Mammary epithelial cell (primary cell): ENCODE measurements at regions of chr17 and their contacts with region 1.

Region 1: DNA sequence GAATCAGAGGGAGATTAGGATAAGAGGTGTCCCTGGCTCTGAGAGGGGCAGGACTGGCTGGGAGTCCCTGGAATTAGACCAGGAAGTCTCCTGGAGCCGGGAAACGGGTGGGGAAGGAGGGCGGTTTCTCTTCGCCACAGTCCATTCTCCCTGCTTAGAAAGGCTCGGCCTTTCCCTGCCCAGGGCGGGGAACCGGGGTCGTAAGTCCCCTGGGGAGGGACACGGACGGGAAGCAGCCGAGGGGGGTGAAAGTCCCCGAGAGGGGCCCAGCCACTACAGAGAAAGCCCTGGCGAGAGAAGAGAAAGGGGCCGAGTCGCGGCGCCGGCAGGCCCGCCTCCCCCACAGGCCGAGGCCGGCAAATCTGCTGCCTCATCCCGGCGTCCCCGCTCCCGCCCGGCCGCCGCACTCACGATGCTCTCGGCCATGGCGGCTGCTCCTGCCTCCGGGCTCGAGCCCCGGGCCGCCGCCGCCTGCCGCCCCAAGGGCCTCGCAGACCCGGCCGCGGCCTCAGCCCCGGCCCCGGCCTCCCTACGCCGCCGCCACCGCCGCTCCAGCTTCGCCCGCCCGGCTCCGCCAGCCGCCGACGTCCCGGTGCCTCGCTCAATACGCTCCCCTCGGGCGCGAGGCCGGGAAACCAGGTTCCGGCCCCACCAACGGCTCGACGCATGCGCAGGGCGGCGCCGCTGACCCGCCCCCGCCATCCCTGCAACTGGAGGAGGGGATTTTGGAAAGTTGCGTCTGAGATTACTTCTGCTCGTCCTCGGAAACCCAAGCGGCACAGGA is at the starts of genes NPLOC4 and TSPAN10:
- DNase-seq: peak; percentile 85
- H3K4me3 ChIP-seq: peak within 1 kb of the TSS; percentile 81 to 89 (median 84)
- H3K27ac ChIP-seq: peak within 1 kb of the TSS; percentile 87
- H3K4me1 ChIP-seq: peaks cover 13% of the 10 kb centered on the region
- H3K27me3 ChIP-seq: no peaks in the 10 kb centered on the region
- CTCF ChIP-seq: no peak
- total RNA-seq, gene NPLOC4: 84.2 to 103 TPM
- total RNA-seq, gene TSPAN10: 1.7 to 1.8 TPM

Region 2: DNA sequence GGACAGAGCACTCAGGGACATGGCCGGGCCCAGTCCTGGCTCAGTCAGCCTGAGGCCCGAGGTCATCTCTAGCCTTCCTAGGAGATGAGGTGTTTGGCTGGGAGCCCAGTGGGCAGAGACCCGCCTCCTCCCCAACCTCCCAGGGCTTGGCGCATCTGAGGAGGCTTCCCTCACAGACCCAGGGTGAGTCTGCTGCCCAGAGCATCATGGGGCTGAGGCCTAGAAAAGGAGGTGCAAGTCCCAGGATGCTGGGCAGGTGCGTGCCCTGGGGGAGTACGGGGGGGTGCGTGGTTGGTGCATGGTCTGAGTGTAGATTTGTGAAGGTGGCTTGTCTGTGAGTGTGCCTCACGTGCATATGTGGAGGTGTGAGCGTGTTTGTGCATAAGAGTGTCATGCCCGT is 15.0 kb after region 1 on chr17:
- CTCF ChIA-PET with region 1: no interaction called
- dilution Hi-C with region 1: no loop called
- in situ Hi-C with region 1: no loop called
- intact Hi-C with region 1: no loop called
- DNase-seq: peak; percentile 69
- H3K4me3 ChIP-seq: no peak overlapping the region
- H3K27ac ChIP-seq: no peak overlapping the region
- H3K4me1 ChIP-seq: peaks cover 12% of the 10 kb centered on the region
- H3K27me3 ChIP-seq: peaks cover 11% of the 10 kb centered on the region
- CTCF ChIP-seq: no peak

Region 3: DNA sequence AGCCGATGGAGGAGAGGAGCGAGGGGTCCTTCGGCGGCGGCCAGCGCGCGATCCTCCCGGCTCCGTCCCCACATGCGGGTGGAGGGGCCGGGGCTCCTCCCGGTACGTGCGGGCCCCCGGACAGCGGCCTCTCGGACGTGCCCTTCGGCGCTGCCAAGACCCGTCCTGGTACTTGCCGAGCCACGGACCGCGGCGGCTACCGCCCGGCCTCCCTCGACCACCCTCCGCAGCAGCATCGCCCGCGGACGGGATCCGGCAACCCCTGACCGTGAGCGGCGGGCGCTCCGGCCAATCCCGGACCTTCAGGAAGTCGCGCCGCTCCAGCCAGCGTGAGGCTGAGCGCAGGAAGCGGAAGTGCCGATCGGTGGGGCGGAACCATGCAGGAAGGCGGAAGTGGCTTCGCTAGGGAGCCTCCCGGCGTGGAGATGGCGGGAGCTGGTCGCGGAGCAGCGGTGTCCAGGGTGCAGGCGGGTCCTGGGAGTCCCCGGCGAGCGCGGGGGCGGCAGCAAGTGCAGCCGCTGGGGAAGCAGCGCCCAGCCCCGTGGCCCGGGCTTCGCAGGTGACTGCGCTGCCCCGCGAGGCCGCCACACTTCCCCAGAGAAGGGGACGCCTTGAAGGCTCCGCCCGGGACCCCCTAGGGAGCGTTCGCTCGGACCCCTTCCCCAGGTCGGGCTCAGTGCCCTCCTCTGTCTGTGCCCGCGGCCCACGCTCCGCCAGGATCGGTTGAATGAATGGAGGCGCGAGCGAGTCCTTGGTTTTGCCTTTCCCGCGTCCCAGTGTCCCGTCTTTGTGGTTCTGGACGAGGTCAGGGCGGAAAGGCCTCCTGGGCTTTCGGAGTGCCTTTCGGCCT is 29.9 kb after region 1 on chr17 and contains the starts of genes CCDC137 and OXLD1:
- CTCF ChIA-PET with region 1: no interaction called
- dilution Hi-C with region 1: no loop called
- in situ Hi-C with region 1: no loop called
- intact Hi-C with region 1: loop called (anchors 1 kb)
- DNase-seq: peak; percentile 94
- H3K4me3 ChIP-seq: peak within 1 kb of the TSS; percentile 70 to 89 (median 82)
- H3K27ac ChIP-seq: peak within 1 kb of the TSS; percentile 74
- H3K4me1 ChIP-seq: peaks cover 21% of the 10 kb centered on the region
- H3K27me3 ChIP-seq: no peaks in the 10 kb centered on the region
- CTCF ChIP-seq: no peak
- total RNA-seq, gene CCDC137: 5.3 to 34.0 TPM
- total RNA-seq, gene OXLD1: 25.2 to 42.4 TPM